A673 (cell line): ENCODE measurements at regions of chr7 and their contacts with region 1.

Region 1: GRCh38 chr7:93551063-93551904 is 23.2 kb downstream of the CALCR start:
- DNase-seq: peak; percentile 63
- H3K4me3 ChIP-seq: no peak overlapping the region
- H3K27ac ChIP-seq: no peak overlapping the region
- H3K4me1 ChIP-seq: no peaks in the 10 kb centered on the region
- H3K27me3 ChIP-seq: no peaks in the 10 kb centered on the region
- CTCF ChIP-seq: peak; percentile 78

Region 2: GRCh38 chr7:93245525-93246432 is 305.5 kb before region 1 on chr7:
- CTCF ChIA-PET with region 1: no interaction called
- POLR2A ChIA-PET with region 1: no interaction called
- intact Hi-C with region 1: loop called (anchors 1 kb)
- DNase-seq: peak; percentile 45
- H3K4me3 ChIP-seq: no peak overlapping the region
- H3K27ac ChIP-seq: no peak overlapping the region
- H3K4me1 ChIP-seq: no peaks in the 10 kb centered on the region
- H3K27me3 ChIP-seq: no peaks in the 10 kb centered on the region
- CTCF ChIP-seq: peak; percentile 66

Region 3: GRCh38 chr7:94190599-94191061 is 639.3 kb after region 1 on chr7:
- CTCF ChIA-PET with region 1: no interaction called
- POLR2A ChIA-PET with region 1: no interaction called
- intact Hi-C with region 1: no loop called
- DNase-seq: peak; percentile 93
- H3K4me3 ChIP-seq: no peak overlapping the region
- H3K27ac ChIP-seq: peak overlapping the region; percentile 53
- H3K4me1 ChIP-seq: peaks cover 12% of the 10 kb centered on the region
- H3K27me3 ChIP-seq: no peaks in the 10 kb centered on the region
- CTCF ChIP-seq: no peak